ENCODE measurements at regions of chr5 and their contacts with region 1.

Region 1: GRCh38 chr5:134738133-134738962 is at the start of gene CAMLG:
- DNase-seq: peak; percentile 96
- H3K4me3 ChIP-seq: peak within 1 kb of the TSS; percentile 47 to 92 (median 73)
- H3K27ac ChIP-seq: peak within 1 kb of the TSS; percentile 70
- H3K4me1 ChIP-seq: peaks cover 5% of the 10 kb centered on the region
- H3K27me3 ChIP-seq: no peaks in the 10 kb centered on the region
- CTCF ChIP-seq: peak; percentile 29 to 65
- total RNA-seq, gene CAMLG: 21.6 to 25.0 TPM

Region 2: DNA sequence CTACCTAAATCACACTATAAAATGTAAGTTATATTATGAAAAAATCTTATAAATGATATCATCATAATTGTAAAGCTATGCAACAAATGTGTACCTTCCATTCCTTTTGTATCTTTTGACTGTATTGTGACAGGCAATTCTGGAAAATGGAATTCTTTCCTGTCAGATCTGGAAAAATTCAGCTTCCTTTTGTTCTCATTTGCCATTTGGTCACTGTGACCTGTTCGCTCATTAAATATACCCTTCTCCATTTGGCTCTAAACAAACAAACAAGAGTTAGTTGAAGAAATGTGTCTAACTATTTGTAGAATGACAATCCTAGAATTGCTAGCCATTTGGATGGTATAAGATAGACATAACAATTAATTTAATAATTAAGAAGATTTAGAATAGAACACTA is 434.0 kb before region 1 on chr5:
- CTCF ChIA-PET with region 1: no interaction called
- dilution Hi-C with region 1: no loop called
- in situ Hi-C with region 1: no loop called
- intact Hi-C with region 1: loop called (anchors 1 kb)
- DNase-seq: no peak
- H3K4me3 ChIP-seq: no peak overlapping the region
- H3K27ac ChIP-seq: no peak overlapping the region
- H3K4me1 ChIP-seq: no peaks in the 10 kb centered on the region
- H3K27me3 ChIP-seq: no peaks in the 10 kb centered on the region
- CTCF ChIP-seq: no peak

Region 3: DNA sequence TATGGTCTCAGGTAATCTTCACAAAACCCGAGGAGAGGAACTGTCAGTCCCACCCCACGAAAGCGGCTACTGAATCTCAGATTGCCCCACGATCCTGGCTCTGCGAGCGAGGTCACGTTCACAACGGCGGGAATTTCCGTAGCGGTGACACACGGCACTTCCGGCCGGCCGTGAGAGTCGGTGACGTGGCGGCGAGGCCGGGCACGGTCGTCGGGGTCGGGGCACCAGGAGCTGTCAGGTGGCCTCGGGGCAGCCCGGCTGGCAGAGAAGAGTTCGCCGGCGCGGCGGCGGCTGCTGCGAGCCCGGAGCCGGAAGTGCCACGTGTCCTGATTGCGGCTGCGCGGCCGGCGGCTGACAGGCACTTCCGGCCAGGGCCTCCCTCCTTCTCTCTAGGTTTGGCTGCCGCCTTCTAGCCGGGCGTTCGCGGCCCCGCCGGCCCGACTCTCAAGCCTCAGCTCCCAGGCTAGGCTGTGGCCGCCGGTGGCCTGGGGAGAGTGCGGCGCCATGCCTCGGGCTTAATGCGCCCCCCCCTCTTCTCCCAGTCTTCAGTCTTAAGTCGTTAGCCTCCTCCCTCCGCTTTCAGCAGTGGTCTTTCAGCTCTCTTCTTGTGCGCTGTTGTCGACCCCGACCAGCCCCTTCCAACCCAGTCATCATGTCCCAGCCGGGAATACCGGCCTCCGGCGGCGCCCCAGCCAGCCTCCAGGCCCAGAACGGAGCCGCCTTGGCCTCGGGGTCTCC is 89.8 kb before region 1 on chr5 and contains the start of gene SEC24A:
- CTCF ChIA-PET with region 1: no interaction called
- dilution Hi-C with region 1: no loop called
- in situ Hi-C with region 1: no loop called
- intact Hi-C with region 1: loop called (anchors 2 kb)
- DNase-seq: peak; percentile 96
- H3K4me3 ChIP-seq: peak within 1 kb of the TSS; percentile 90 to 100 (median 99)
- H3K27ac ChIP-seq: peak within 1 kb of the TSS; percentile 98
- H3K4me1 ChIP-seq: no peaks in the 10 kb centered on the region
- H3K27me3 ChIP-seq: no peaks in the 10 kb centered on the region
- CTCF ChIP-seq: no peak
- total RNA-seq, gene SEC24A: 20.4 to 20.8 TPM

Region 4: GRCh38 chr5:134758504-134759341 is 20.4 kb after region 1 on chr5 and contains the start of gene DDX46:
- CTCF ChIA-PET with region 1: no interaction called
- dilution Hi-C with region 1: no loop called
- in situ Hi-C with region 1: no loop called
- intact Hi-C with region 1: loop called (anchors 1 kb)
- DNase-seq: peak; percentile 94
- H3K4me3 ChIP-seq: peak within 1 kb of the TSS; percentile 73 to 95 (median 82)
- H3K27ac ChIP-seq: peak within 1 kb of the TSS; percentile 58
- H3K4me1 ChIP-seq: peaks cover 15% of the 10 kb centered on the region
- H3K27me3 ChIP-seq: no peaks in the 10 kb centered on the region
- CTCF ChIP-seq: peak; percentile 63 to 80
- total RNA-seq, gene DDX46: 13.2 to 57.7 TPM

Region 5: GRCh38 chr5:134851307-134851923 is 113.1 kb after region 1 on chr5:
- CTCF ChIA-PET with region 1: no interaction called
- dilution Hi-C with region 1: no loop called
- in situ Hi-C with region 1: no loop called
- intact Hi-C with region 1: loop called (anchors 1 kb)
- DNase-seq: peak; percentile 37
- H3K4me3 ChIP-seq: no peak overlapping the region
- H3K27ac ChIP-seq: no peak overlapping the region
- H3K4me1 ChIP-seq: peaks cover 4% of the 10 kb centered on the region
- H3K27me3 ChIP-seq: no peaks in the 10 kb centered on the region
- CTCF ChIP-seq: peak; percentile 45 to 74

Region 6: GRCh38 chr5:134873987-134874830 is 135.9 kb after region 1 on chr5 and contains the start of gene TXNDC15:
- CTCF ChIA-PET with region 1: no interaction called
- dilution Hi-C with region 1: no loop called
- in situ Hi-C with region 1: no loop called
- intact Hi-C with region 1: loop called (anchors 1 kb)
- DNase-seq: peak; percentile 81
- H3K4me3 ChIP-seq: peak within 1 kb of the TSS; percentile 63 to 96 (median 68)
- H3K27ac ChIP-seq: peak within 1 kb of the TSS; percentile 75
- H3K4me1 ChIP-seq: peaks cover 13% of the 10 kb centered on the region
- H3K27me3 ChIP-seq: no peaks in the 10 kb centered on the region
- CTCF ChIP-seq: no peak
- total RNA-seq, gene TXNDC15: 30.4 to 43.0 TPM